Mammary epithelial cell (primary cell): ENCODE measurements at regions of chr18 and their contacts with region 1.

Region 1: DNA sequence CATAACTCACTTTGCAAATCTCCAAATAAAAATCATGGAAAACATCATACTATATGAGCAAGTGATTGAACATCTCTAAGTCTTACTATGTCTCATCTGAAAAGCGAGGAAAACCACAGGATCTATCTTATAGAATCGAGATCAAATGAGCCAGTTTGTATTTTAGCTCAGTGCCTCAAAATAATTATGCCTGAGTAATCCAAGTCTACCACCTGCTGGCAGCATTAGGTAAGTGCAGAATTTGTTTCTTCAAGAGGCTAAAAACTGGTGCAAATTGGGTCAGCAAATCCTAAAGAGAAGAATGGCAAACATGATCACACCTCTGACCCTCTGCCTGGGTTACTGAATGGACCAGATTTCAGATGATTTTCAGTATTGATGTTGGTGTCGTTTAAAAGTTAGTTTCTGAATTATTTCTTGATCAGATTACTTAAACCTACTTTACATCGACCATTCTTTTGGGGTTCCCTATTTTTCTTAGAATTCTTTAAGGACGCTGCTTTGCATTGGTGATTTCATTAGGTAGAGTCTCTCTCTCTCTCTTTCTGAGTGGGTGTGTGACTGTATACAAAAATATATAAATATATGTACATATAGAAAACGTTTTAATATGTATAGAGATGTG is 12.7 kb upstream of the FHOD3 start:
- DNase-seq: peak; percentile 56
- H3K4me3 ChIP-seq: no peak overlapping the region
- H3K27ac ChIP-seq: no peak overlapping the region
- H3K4me1 ChIP-seq: no peaks in the 10 kb centered on the region
- H3K27me3 ChIP-seq: no peaks in the 10 kb centered on the region
- CTCF ChIP-seq: peak; percentile 81 to 86

Region 2: DNA sequence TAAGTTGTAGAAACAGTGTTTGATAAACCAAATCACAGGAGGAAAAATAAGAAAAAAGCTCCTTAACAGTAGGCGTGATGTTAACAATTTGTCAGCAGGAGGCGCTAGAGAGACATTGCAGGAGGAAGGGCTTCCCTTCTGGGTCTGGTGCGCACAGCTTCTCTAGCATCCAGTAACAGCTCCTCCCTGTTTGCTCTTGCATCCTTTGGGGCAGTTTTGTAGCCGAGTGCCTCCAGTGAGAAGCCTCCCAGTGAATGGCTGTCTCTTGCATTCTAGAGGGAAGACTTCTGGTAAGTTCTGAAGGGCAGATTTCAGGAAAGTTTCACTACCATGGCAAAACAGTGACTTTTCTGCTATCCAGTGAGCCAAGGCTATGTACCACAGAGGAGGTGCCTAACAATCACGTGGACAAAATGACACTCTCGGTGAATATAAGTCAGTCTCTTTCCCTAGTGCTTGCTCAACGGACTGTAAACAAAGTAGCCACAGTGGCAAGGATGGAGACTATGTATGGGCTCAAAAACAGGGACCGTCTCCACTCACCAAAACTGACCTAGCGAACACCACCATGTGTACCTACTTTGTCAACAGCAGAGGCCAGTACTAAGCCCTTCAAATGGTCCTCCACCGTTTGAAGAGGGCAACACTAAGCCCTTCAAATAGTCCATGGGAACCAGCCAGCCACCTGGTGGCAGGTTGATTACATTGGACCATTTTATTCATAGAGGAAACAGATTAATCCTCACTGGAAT is 898.0 kb before region 1 on chr18:
- CTCF ChIA-PET with region 1: no interaction called
- dilution Hi-C with region 1: no loop called
- in situ Hi-C with region 1: no loop called
- intact Hi-C with region 1: loop called (anchors 1 kb)
- DNase-seq: peak; percentile 61
- H3K4me3 ChIP-seq: no peak overlapping the region
- H3K27ac ChIP-seq: no peak overlapping the region
- H3K4me1 ChIP-seq: no peaks in the 10 kb centered on the region
- H3K27me3 ChIP-seq: no peaks in the 10 kb centered on the region
- CTCF ChIP-seq: peak; percentile 92 to 96

Region 3: GRCh38 chr18:36015629-36016028 is 269.2 kb before region 1 on chr18:
- CTCF ChIA-PET with region 1: no interaction called
- dilution Hi-C with region 1: no loop called
- in situ Hi-C with region 1: loop called in 1 of 2 experiments (anchors 10 kb)
- intact Hi-C with region 1: loop called (anchors 1 kb)
- DNase-seq: no peak
- H3K4me3 ChIP-seq: no peak overlapping the region
- H3K27ac ChIP-seq: no peak overlapping the region
- H3K4me1 ChIP-seq: no peaks in the 10 kb centered on the region
- H3K27me3 ChIP-seq: no peaks in the 10 kb centered on the region
- CTCF ChIP-seq: no peak

Region 4: DNA sequence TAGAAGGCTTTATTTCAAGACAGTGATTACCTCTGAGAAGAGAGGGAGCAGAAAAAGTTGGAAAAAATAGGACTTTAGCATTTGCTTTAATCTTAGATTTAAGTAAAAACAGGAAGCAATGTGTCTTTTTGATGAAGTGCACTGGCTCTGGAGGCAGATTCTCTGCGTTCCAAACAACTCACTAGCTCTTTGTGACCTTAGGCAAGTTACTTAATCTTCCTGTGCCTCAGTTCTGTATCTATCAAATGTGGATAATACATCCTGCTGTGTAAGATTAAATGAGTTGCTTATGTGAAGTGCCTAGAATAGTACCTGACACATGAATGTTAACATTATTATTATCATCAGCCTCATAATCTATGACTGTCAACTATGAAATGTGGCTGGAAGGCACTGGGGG is 259.8 kb before region 1 on chr18:
- CTCF ChIA-PET with region 1: no interaction called
- dilution Hi-C with region 1: no loop called
- in situ Hi-C with region 1: loop called in 1 of 2 experiments (anchors 10 kb)
- intact Hi-C with region 1: no loop called
- DNase-seq: peak; percentile 11
- H3K4me3 ChIP-seq: no peak overlapping the region
- H3K27ac ChIP-seq: peak overlapping the region; percentile 29
- H3K4me1 ChIP-seq: peaks cover 8% of the 10 kb centered on the region
- H3K27me3 ChIP-seq: no peaks in the 10 kb centered on the region
- CTCF ChIP-seq: no peak

Region 5: DNA sequence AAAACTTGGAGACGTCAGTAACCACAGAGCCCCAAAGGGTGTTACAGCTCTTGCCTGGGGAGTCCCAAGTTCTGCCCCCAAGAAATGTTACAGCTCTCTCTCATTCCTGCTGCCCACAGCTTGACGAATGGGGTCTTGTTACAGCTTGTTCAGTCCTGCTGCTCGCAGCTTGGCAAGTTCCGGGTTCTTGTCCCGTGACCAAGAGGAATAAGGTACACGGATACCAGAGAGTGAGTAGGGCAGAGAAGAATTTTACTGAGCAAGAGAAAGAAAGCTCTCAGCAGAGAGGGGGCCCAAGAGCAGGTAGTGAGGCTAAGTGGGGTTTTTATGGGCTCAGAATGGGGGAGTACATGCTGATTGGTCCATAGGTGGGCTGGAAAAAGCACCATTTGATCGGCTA is 182.8 kb before region 1 on chr18:
- CTCF ChIA-PET with region 1: no interaction called
- dilution Hi-C with region 1: no loop called
- in situ Hi-C with region 1: loop called (anchors 5 to 10 kb)
- intact Hi-C with region 1: no loop called
- DNase-seq: peak; percentile 75
- H3K4me3 ChIP-seq: no peak overlapping the region
- H3K27ac ChIP-seq: peak overlapping the region; percentile 11
- H3K4me1 ChIP-seq: peaks cover 9% of the 10 kb centered on the region
- H3K27me3 ChIP-seq: no peaks in the 10 kb centered on the region
- CTCF ChIP-seq: peak in 1 of 2 donors; percentile 5

Region 6: DNA sequence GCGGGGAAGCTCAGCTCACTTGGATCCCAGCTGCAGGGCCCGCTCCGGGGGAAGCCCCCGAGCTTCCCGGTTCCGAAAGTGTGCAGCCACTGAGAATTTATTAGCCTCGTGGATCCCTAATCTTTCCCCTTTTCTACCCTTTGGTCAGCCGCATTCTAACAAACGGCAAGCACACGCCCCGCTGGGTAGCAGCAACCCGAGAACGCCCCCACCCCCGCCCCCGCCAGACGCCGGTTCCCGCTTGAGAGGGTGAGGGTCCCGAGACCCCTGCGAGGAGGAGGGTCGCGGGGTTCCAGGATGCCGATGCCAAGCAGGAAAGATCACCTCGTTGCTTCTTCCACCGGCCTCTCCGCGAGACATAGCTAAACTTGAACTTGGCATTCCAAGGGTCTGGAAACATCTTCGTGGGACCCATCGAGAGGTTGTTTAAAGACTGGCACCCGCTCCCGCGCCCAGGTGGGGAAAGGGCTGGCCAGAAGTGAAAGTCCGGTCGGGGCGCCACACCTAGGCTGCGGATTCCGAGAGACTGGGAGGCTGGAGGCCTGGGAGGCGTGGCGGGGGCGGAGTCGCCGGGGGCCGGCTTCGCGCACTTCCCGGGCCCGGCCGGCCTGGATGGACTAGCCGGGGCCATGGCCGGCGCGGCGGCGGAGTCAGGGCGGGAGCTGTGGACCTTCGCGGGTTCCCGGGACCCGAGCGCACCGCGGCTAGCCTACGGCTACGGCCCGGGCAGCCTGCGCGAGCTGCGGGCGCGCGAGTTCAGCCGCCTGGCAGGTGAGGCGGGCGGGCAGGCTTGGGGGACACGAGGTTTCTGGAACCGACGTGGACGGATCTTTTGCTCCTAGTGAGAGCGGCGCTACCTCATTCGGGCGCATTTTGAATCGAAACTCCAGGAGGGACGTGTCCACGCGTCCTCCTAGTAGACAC is 97.6 kb before region 1 on chr18 and contains the start of gene MOCOS:
- CTCF ChIA-PET with region 1: no interaction called
- dilution Hi-C with region 1: no loop called
- in situ Hi-C with region 1: no loop called
- intact Hi-C with region 1: loop called (anchors 5 kb)
- DNase-seq: peak; percentile 77
- H3K4me3 ChIP-seq: peak within 1 kb of the TSS; percentile 66 to 85 (median 78)
- H3K27ac ChIP-seq: peak within 1 kb of the TSS; percentile 57
- H3K4me1 ChIP-seq: peaks cover 8% of the 10 kb centered on the region
- H3K27me3 ChIP-seq: no peaks in the 10 kb centered on the region
- CTCF ChIP-seq: no peak
- total RNA-seq, gene MOCOS: 7.5 to 17.3 TPM